Activated CD4-positive, alpha-beta T cell treated with anti-CD3 and anti-CD28 coated beads for 36 hours (primary cell): ENCODE measurements at regions of chr15 and their contacts with region 1.

Region 1: GRCh38 chr15:35751413-35752133 is 205.6 kb upstream of the DPH6 start:
- DNase-seq: peak; percentile 74
- ATAC-seq: peak; percentile 26
- H3K4me3 Mint-ChIP-seq: no peak overlapping the region
- H3K27ac Mint-ChIP-seq: no peak overlapping the region
- H3K4me1 Mint-ChIP-seq: no peaks in the 10 kb centered on the region
- H3K27me3 Mint-ChIP-seq: peaks cover 10% of the 10 kb centered on the region

Region 2: DNA sequence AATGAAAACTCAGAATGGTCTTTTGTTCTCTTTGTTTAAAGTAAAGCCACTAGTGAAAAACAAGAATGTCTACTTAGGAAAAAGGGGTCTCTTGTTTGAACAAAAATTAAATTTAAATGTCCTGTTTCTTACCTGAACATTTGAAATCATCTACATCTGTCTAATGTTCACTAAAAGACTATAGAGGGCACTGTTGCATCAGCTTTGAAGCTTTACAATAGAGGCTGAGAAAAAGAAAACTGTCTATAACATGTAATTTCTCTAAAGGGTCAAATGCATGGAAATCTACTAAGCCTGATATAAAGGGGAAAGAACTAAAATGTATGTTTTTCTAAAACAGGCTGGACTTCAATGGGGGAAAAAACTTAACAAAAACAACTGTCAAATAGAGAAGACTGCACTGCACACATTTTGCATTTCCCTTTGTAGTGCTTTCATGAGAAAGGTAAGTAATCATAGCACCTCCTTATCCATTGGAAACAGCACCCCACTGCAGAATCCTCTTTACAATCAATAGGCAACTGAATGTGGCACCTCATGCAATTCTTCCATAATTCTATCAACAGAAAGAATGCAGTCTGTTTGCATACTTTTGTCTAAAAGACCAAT is 231.9 kb before region 1 on chr15:
- CTCF ChIA-PET with region 1: interaction called, 7 read pairs
- POLR2A ChIA-PET with region 1: no interaction called
- intact Hi-C with region 1: loop called in 1 of 2 experiments (anchors 5 kb)
- DNase-seq: no peak
- ATAC-seq: peak; percentile 65
- H3K4me3 Mint-ChIP-seq: no peak overlapping the region
- H3K27ac Mint-ChIP-seq: no peak overlapping the region
- H3K4me1 Mint-ChIP-seq: peaks cover 4% of the 10 kb centered on the region
- H3K27me3 Mint-ChIP-seq: no peaks in the 10 kb centered on the region

Region 3: DNA sequence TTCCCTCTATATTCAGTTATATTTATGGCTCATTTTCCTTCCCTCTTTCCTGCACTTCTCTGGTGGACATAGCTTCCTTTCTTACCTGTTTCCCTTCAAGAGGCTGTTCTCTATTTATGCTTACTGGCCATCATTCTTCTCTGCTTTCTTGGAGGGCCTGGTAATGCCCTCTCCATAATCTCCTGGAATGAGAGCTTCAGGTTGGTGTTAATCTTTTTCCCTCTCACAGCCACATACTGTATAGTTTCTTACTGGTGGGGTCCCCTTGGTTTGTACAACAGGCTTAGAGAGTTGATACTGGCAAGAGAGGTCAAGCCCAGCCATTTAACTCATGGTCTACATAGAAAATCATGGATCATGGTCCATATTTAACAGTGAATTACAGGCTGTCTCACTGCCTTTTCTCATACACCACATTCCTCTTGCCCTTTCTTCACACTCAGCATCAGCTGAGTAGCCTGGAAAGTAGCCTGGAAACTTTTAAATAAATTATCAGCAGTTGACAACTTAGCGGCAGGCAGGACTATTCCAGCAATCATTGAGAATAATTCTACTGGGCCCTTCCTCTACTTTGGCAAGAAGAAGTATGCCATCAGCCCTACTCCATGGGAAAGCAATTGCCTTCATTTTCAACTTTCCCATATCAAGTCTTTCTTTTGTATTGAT is 167.6 kb before region 1 on chr15:
- CTCF ChIA-PET with region 1: no interaction called
- POLR2A ChIA-PET with region 1: no interaction called
- intact Hi-C with region 1: no loop called
- DNase-seq: no peak
- ATAC-seq: no peak
- H3K4me3 Mint-ChIP-seq: no peak overlapping the region
- H3K27ac Mint-ChIP-seq: no peak overlapping the region
- H3K4me1 Mint-ChIP-seq: no peaks in the 10 kb centered on the region
- H3K27me3 Mint-ChIP-seq: peaks cover 10% of the 10 kb centered on the region

Region 4: DNA sequence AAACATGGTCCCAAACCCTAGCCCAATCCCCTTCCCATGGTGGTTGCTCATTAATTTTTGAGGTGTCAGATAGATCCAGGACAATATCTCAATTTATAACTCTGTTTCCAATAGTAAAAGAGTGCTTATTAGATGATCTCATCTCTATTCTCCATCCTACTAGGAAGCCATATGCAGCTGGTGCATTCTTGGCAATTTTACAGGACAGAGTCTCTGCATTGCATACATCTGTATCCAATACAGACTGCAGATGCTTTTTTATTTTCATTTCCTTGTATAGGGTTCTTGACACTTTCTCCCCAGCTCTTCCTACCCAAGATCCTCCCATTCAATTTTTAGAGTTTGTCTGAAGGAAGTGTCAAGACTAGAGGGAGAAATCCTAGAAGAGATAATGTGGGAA is 10.8 kb before region 1 on chr15:
- CTCF ChIA-PET with region 1: interaction called, 12 read pairs
- POLR2A ChIA-PET with region 1: no interaction called
- intact Hi-C with region 1: no loop called
- DNase-seq: no peak
- ATAC-seq: no peak
- H3K4me3 Mint-ChIP-seq: no peak overlapping the region
- H3K27ac Mint-ChIP-seq: no peak overlapping the region
- H3K4me1 Mint-ChIP-seq: no peaks in the 10 kb centered on the region
- H3K27me3 Mint-ChIP-seq: peaks cover 5% of the 10 kb centered on the region

Region 5: GRCh38 chr15:35764661-35765519 is 13.3 kb after region 1 on chr15:
- CTCF ChIA-PET with region 1: interaction called, 11 read pairs
- POLR2A ChIA-PET with region 1: no interaction called
- intact Hi-C with region 1: no loop called
- DNase-seq: no peak
- ATAC-seq: no peak
- H3K4me3 Mint-ChIP-seq: no peak overlapping the region
- H3K27ac Mint-ChIP-seq: no peak overlapping the region
- H3K4me1 Mint-ChIP-seq: no peaks in the 10 kb centered on the region
- H3K27me3 Mint-ChIP-seq: peaks cover 2% of the 10 kb centered on the region

Region 6: GRCh38 chr15:37134699-37135131 is 1383.1 kb after region 1 on chr15:
- CTCF ChIA-PET with region 1: no interaction called
- POLR2A ChIA-PET with region 1: no interaction called
- intact Hi-C with region 1: loop called in 1 of 2 experiments (anchors 10 kb)
- DNase-seq: no peak
- ATAC-seq: no peak
- H3K4me3 Mint-ChIP-seq: no peak overlapping the region
- H3K27ac Mint-ChIP-seq: no peak overlapping the region
- H3K4me1 Mint-ChIP-seq: no peaks in the 10 kb centered on the region
- H3K27me3 Mint-ChIP-seq: peaks cover 12% of the 10 kb centered on the region